CD8-positive, alpha-beta memory T cell (primary cell): ENCODE measurements at regions of chr15 and their contacts with region 1.

Region 1: DNA sequence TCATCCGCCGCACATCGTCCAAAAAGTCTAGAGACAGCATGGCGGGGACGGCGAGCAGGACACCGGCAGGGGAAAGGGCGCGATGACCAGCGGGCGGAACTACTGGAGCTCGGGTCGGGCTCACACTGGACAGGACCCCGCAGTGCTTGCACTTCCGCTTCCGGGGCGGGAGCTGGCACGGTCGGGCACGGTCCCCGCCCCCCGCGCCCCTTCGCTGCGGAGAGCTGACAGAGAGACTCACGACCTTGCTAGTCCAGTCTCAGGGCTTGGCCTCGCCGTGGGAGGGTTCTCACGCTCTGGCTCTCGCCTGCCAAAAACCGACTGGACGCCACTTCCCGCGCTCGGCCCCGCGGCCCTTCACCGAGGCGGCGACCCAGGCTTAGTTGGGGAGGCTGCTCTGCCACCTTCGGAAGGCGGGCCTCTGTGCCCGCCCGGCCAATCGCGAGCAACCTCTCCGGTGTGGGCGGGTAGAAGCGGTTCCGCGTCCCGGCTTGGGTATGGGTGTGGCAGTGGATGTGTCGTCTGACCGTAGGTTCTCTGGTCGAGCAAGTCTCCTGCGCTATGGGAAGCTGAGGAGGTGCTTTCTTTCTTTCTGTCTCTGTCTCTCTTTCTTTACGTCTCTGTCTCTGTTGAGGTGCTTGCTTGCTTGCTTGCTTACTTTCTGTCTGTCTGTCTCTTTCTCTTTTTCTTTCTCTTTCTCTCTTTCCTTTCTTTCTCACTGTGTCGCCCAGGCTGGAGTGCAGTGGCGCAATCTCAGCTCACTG is at the start of gene SEC11A:
- DNase-seq: peak; percentile 88 to 95 (median 89)
- H3K4me3 ChIP-seq: peak within 1 kb of the TSS; percentile 99
- H3K4me3 Mint-ChIP-seq: peak within 1 kb of the TSS; percentile 92 to 98 (median 95)
- H3K27ac ChIP-seq: peak within 1 kb of the TSS; percentile 94
- H3K27ac Mint-ChIP-seq: peak within 1 kb of the TSS; percentile 93 to 100 (median 96)
- H3K4me1 ChIP-seq: peaks cover 41% of the 10 kb centered on the region
- H3K4me1 Mint-ChIP-seq: peaks cover 38 to 69% (median 60%) of the 10 kb centered on the region in 3 donors
- H3K27me3 ChIP-seq: no peaks in the 10 kb centered on the region
- H3K27me3 Mint-ChIP-seq: no peaks in the 10 kb centered on the region
- total RNA-seq, gene SEC11A: 132 to 133 TPM

Region 2: DNA sequence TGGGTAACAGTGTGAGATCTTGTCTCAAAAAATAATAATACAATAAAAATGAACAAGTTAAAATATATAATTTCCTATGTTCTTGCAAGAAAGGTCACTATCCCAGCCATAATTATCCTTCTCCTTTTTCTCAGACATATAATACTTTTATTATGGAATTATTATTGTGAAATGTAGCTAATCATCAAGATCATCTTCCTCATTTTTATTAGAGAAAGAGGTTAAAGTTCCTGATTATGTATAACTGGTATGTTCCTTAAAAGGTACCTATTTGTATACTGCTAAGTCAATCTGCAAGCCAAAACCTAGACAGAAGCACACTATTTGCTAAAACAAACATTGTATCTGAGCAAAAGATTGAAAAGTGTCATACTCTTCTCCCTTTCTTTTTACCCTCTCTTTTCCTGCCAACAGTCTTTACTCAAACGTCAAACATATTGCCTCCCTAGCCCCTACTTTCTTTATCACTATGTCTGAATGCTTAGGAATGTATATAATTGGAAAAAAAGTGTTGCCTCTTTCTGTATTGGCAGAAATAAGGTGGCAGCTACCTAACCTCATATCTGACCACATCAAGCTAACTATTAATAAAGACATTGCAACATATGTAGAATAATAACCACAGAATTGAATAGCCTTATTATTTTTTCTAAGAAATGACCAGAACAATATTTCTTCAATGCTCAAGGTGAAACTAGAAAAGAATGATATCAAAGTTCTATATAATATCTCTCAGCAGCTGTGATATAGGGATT is 18.8 kb before region 1 on chr15:
- CTCF ChIA-PET with region 1: interaction called, 7 read pairs
- POLR2A ChIA-PET with region 1: interaction called, 10 read pairs
- DNase-seq: no peak
- H3K4me3 ChIP-seq: no peak overlapping the region
- H3K4me3 Mint-ChIP-seq: peak overlapping the region in 3 of 7 donors; percentile 2 to 13 (median 5)
- H3K27ac ChIP-seq: no peak overlapping the region
- H3K27ac Mint-ChIP-seq: peak overlapping the region in 7 of 8 donors; percentile 1 to 71 (median 43)
- H3K4me1 ChIP-seq: peaks cover 27% of the 10 kb centered on the region
- H3K4me1 Mint-ChIP-seq: peaks cover 50 to 80% (median 70%) of the 10 kb centered on the region in 3 donors
- H3K27me3 ChIP-seq: no peaks in the 10 kb centered on the region
- H3K27me3 Mint-ChIP-seq: peaks cover 0 to 2% of the 10 kb centered on the region in 2 donors

Region 3: GRCh38 chr15:84734794-84735479 is 18.7 kb after region 1 on chr15:
- CTCF ChIA-PET with region 1: interaction called, 27 read pairs
- POLR2A ChIA-PET with region 1: interaction called, 72 read pairs
- DNase-seq: peak; percentile 40 to 82 (median 67)
- H3K4me3 ChIP-seq: peak overlapping the region; percentile 49
- H3K4me3 Mint-ChIP-seq: peak overlapping the region; percentile 69 to 93 (median 83)
- H3K27ac ChIP-seq: peak overlapping the region; percentile 57
- H3K27ac Mint-ChIP-seq: peak overlapping the region; percentile 81 to 99 (median 90)
- H3K4me1 ChIP-seq: peaks cover 53% of the 10 kb centered on the region
- H3K4me1 Mint-ChIP-seq: peaks cover 37 to 52% (median 46%) of the 10 kb centered on the region in 3 donors
- H3K27me3 ChIP-seq: no peaks in the 10 kb centered on the region
- H3K27me3 Mint-ChIP-seq: no peaks in the 10 kb centered on the region

Region 4: DNA sequence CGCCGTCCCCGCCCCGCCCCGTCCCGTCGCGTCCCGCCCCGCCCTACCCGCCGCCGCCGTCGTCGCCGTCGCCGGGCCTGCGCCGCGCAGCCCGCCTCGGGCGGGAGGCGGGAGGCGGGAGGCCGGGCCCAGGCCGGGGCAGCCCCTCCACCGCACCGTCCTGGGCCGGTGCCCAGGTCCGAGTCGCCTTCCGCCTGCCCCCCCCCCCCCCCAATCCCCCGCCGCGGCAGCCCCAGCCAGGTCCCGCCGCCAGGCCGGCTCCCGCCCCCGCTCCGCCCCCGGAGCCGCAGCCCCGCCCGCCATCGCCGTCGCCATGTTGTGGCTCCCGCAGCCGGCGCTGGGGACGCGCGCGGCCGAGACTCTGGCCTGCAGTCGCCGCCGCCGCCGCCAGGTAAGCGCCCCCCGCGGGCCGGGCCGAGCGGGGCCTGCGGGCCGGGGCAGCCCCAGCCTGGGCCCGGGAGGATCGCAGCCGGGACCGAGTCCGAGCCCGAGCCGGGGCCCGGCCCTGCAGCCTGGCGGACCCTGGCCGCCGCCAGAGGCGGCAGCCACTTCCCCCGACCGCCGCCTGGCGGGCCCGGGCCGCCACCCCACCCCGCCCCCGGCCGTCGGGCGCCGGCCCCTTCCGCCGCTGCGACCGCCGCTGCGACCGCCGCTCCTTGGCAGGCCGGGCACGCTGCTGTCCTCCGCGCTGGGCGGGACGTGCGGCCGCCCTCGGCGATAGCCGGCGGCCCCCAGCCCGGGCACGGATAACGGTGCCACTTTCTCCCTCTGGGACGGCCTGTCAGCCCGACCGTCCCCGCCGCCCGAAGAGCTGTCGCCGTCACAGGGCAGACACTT is 32.3 kb after region 1 on chr15 and contains the start of gene ZNF592:
- CTCF ChIA-PET with region 1: interaction called, 33 read pairs
- POLR2A ChIA-PET with region 1: interaction called, 75 read pairs
- DNase-seq: peak; percentile 77 to 87 (median 81)
- H3K4me3 ChIP-seq: peak within 1 kb of the TSS; percentile 91
- H3K4me3 Mint-ChIP-seq: peak within 1 kb of the TSS; percentile 93 to 100 (median 98)
- H3K27ac ChIP-seq: peak within 1 kb of the TSS; percentile 91
- H3K27ac Mint-ChIP-seq: peak within 1 kb of the TSS; percentile 93 to 100 (median 99)
- H3K4me1 ChIP-seq: peaks cover 52% of the 10 kb centered on the region
- H3K4me1 Mint-ChIP-seq: peaks cover 62 to 75% (median 71%) of the 10 kb centered on the region in 3 donors
- H3K27me3 ChIP-seq: no peaks in the 10 kb centered on the region
- H3K27me3 Mint-ChIP-seq: peaks cover 0 to 3% of the 10 kb centered on the region in 2 donors
- total RNA-seq, gene ZNF592: 31.2 to 33.1 TPM